ENCODE measurements at regions of chr16 and their contacts with region 1.

Region 1: GRCh38 chr16:83826146-83826913 is 18.6 kb downstream of the HSBP1 start:
- DNase-seq: peak; percentile 65 to 95 (median 78)
- ATAC-seq: peak; percentile 99
- H3K4me3 ChIP-seq: no peak overlapping the region
- H3K27ac ChIP-seq: no peak overlapping the region
- H3K4me1 ChIP-seq: peaks cover 0 to 8% of the 10 kb centered on the region in 2 donors
- H3K27me3 ChIP-seq: no peaks in the 10 kb centered on the region
- CTCF ChIP-seq: peak; percentile 61 to 95

Region 2: GRCh38 chr16:83891742-83892141 is 65.4 kb after region 1 on chr16:
- intact Hi-C with region 1: loop called in 1 of 2 experiments (anchors 2 kb)
- DNase-seq: no peak
- ATAC-seq: no peak
- H3K4me3 ChIP-seq: no peak overlapping the region
- H3K27ac ChIP-seq: no peak overlapping the region
- H3K4me1 ChIP-seq: no peaks in the 10 kb centered on the region
- H3K27me3 ChIP-seq: no peaks in the 10 kb centered on the region
- CTCF ChIP-seq: no peak

Region 3: GRCh38 chr16:83925957-83926725 is 99.8 kb after region 1 on chr16:
- intact Hi-C with region 1: no loop called
- DNase-seq: peak in 1 of 4 donors; percentile 61
- ATAC-seq: no peak
- H3K4me3 ChIP-seq: no peak overlapping the region
- H3K27ac ChIP-seq: no peak overlapping the region
- H3K4me1 ChIP-seq: no peaks in the 10 kb centered on the region
- H3K27me3 ChIP-seq: no peaks in the 10 kb centered on the region
- CTCF ChIP-seq: no peak